ENCODE measurements at regions of chr6 and their contacts with region 1.

Region 1: GRCh38 chr6:9439621-9440330 is 975.1 kb downstream of the TFAP2A start:
- DNase-seq: no peak
- H3K4me3 ChIP-seq: no peak overlapping the region
- H3K27ac ChIP-seq: no peak overlapping the region
- H3K4me1 ChIP-seq: no peaks in the 10 kb centered on the region
- H3K27me3 ChIP-seq: no peaks in the 10 kb centered on the region
- CTCF ChIP-seq: no peak
- EP300 ChIP-seq: no peak
- POLR2A ChIP-seq: no peak

Region 2: DNA sequence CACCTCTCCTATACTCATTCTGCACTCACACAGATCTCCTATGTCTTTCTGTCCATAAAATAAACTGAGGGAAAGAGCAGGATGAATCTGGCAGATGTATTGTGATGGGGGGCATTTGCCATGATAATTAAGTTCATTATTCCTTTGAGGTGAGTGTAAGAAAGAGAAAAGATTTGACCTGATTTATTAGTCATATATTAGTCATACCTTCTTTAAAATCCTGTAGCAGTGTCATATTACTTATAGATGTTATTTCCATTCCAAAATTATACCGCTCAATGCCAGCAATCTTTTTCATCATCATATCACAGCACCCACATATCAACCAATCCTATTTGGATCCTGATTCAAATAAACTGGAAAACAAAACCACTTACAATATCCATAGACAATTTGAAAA is 271.1 kb before region 1 on chr6:
- in situ Hi-C with region 1: no loop called
- intact Hi-C with region 1: loop called (anchors 10 kb)
- DNase-seq: no peak
- H3K4me3 ChIP-seq: no peak overlapping the region
- H3K27ac ChIP-seq: no peak overlapping the region
- H3K4me1 ChIP-seq: no peaks in the 10 kb centered on the region
- H3K27me3 ChIP-seq: no peaks in the 10 kb centered on the region
- CTCF ChIP-seq: no peak
- EP300 ChIP-seq: no peak
- POLR2A ChIP-seq: no peak

Region 3: GRCh38 chr6:9494864-9495263 is 55.1 kb after region 1 on chr6:
- in situ Hi-C with region 1: no loop called
- intact Hi-C with region 1: no loop called
- DNase-seq: no peak
- H3K4me3 ChIP-seq: no peak overlapping the region
- H3K27ac ChIP-seq: no peak overlapping the region
- H3K4me1 ChIP-seq: no peaks in the 10 kb centered on the region
- H3K27me3 ChIP-seq: no peaks in the 10 kb centered on the region
- CTCF ChIP-seq: no peak
- EP300 ChIP-seq: no peak
- POLR2A ChIP-seq: no peak

Measured in transverse colon (tissue), 4 donors.